ENCODE measurements at regions of chr6 and their contacts with region 1.

Region 1: DNA sequence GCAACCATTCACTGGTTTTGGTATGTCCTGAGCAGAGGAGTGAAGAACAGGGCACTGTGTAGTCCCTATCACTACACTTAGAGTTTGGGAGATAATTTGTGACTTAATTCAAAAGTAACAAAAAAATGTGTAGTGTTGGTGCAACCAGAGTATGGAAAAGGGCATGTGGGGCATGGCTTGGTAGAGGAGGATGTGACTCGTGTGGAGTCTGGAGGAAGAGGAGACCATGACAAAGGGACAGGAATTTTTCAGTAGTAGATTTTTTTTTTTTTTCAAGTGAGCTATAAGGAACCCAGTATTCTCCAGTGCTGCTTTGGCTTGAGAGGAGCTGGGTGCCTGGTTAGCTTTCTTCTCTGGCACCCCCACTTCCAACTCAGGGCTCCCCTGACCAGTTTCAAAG is 5.1 kb downstream of the MTRES1 start:
- DNase-seq: no peak

Region 2: DNA sequence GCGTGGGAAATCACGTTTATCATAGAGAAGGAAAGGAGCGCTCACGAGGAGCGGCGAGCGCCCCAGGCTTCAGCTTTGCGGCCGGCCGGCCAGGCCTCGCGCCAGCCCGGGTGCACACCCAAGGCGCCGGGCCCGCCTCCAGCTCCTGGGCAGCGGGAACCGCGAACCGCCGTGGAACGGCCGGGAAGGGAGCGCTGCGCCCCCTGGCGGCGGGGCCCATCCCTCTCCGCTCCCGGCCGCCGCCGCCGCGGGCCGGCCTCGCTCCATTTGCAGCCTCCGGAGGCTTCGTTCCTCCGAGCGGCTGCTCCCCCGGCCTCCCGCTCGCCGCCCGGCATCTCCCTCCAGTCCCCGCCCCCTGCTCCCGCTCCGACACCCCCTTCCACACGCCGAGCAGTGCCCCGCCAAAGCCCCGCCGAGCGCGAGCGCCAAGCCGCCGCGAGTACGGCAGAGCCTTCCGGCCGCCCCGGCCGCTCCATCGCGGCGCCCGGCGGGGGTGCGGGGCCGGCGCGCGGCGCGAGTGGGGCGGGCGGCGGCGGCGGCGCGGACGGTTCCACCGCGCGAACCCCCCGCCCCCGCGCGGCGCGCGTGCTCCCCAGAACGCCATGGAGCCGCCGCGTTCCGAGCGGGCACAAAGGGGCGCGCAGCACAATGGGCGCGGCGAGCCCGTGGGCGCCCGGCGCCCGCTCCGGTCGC is 81.2 kb after region 1 on chr6:
- intact Hi-C with region 1: loop called (anchors 1 kb)
- DNase-seq: peak; percentile 72 to 96 (median 77)